ENCODE measurements at regions of chr17 and their contacts with region 1.

Region 1: DNA sequence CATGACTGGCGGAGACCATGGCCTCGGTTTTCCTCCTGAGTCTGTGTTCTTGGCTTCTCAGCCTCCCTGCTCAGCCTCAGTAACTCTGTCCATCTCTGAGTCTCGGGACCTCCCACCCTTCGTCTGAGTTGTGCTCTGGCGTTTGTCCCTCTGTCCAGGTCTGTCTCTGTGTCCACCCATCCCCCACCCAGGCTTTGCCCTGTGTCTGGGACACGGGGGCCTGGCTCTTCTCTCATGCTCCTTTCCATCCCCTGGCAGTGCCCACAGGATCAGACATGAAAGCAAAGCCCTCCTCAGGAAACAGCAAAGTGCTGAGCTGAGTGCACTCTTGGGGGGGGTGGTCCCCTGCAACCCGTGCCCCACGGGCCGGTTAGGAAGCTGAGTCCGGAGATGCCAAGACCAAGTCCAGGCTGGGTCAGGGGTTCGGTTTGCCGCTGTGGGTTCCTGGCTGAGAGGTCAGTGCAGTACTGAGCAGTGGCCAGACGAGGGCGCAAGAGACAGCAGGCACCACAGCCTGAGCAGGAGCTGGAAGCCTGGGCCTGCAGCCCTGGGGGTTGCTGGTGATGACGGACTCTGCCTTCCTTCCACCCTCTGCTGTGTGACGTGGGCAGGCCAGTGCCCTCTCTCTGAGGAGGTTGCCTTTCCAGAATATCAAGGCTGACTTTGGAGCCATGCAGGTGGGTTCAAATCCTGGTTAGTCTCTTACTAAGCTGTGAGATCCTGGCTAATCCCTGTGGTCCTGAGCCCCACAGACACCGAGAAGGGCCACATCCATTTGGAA is 2.5 kb downstream of the P2RX1 start:
- DNase-seq: peak; percentile 77 to 91
- ATAC-seq: peak; percentile 73 to 92
- H3K4me3 ChIP-seq: no peak overlapping the region
- H3K27ac ChIP-seq: peak overlapping the region in 1 of 2 experiments; percentile 65; a peak in 3 of 6 replicates
- H3K4me1 ChIP-seq: peaks cover 21% of the 10 kb centered on the region; the same call in 2 of the 3 replicates
- CTCF ChIP-seq: peak; percentile 94
- EP300 ChIP-seq: no peak
- POLR2A ChIP-seq: no peak
- RAD21 ChIP-seq: peak; percentile 88 to 91

Region 2: DNA sequence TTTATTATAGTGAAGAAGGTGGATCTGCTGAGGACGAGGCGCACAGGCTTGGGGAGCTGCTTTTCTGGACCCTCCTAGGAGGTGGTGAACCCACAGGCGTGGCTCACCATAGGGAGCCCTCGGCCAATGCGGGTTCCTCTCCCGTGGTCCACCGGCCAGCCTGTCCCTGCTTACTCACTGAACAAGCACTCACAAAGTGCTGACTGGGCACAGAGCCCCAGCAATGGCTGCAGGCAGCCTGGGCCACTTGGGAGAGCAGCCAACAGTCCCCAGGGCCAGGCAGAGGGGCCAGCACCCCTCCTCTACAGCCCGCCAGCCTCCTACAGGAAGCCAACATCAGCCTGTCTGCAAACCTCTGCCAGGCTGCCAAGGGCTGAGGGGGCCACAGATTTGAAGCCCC is 48.5 kb before region 1 on chr17:
- CTCF ChIA-PET with region 1: interaction called, 81 read pairs
- POLR2A ChIA-PET with region 1: no interaction called
- DNase-seq: no peak
- ATAC-seq: peak; percentile 42 to 57
- H3K4me3 ChIP-seq: no peak overlapping the region
- H3K27ac ChIP-seq: peak overlapping the region in 1 of 2 experiments; percentile 36; a peak in 3 of 6 replicates
- H3K4me1 ChIP-seq: peaks cover 9% of the 10 kb centered on the region; the same call in 2 of the 3 replicates
- CTCF ChIP-seq: no peak
- EP300 ChIP-seq: no peak
- POLR2A ChIP-seq: no peak
- RAD21 ChIP-seq: no peak

Region 3: DNA sequence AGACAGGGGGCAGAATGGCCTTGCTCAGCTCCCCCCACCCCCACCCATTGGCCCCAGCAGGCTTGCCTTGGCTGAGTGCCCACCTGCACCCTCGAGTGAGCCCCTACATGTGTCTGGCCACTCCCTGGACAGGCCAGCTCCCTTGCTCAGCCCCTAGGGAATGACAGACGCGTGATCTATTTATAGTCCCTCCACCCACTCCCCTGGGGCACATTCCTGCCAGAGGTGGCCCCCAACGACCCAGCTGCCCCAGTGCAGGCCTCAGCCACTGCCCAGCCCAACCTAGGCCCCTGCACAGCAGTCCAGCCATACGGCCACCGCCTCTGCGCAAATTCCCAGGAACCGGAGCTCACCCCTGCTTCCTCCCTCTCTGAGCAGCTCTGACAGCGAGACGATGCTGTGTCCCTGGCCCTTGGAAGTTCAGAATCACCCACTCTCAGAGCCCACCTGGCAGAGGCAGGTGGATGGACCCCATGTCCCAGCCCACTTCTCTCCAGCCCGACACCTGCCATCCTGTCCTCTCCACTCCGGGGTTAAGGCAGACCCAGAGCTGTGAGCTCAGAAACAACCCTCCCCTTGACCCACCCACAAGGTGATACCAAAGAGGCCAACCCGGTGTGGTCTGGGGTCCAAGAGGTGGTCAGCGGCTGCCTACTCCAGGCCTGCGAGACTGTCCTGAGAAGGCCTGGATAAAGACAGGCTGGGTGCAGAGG is 14.1 kb after region 1 on chr17:
- CTCF ChIA-PET with region 1: interaction called, 86 read pairs
- POLR2A ChIA-PET with region 1: no interaction called
- DNase-seq: no peak
- ATAC-seq: no peak
- H3K4me3 ChIP-seq: no peak overlapping the region
- H3K27ac ChIP-seq: no peak overlapping the region
- H3K4me1 ChIP-seq: no peaks in the 10 kb centered on the region
- CTCF ChIP-seq: no peak
- EP300 ChIP-seq: no peak
- POLR2A ChIP-seq: no peak
- RAD21 ChIP-seq: no peak

Region 4: DNA sequence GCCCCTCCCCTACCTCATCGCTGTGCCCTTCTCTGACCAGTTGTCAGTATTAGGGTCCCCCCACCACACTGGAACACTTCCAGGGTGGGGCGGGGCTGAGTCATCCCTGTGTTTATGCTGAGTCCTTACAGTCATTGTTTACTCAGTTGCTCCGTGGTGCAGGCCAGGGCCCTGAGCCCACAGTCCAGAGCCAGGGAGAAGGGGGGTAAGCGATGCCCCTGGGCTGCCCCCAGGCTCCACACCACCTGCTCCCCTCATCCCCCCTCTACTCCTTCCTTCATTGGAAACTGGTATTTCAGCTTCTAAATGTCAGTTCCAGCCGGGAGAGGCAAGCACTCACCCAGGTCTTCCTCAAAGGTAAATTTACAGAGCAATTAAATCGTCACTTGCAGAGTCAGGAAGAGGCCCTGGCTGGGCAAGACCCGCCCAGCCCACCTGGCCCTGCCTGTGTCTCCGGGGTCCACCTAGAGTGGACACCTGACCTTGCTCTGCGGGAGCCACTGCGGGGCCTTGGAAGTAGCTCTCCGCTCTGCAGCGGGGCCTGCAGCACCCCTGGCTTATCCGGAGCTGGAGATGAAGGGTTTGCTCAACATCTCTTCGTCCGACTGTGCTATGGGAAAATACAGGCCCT is 45.7 kb after region 1 on chr17:
- CTCF ChIA-PET with region 1: interaction called, 21 read pairs
- POLR2A ChIA-PET with region 1: no interaction called
- DNase-seq: peak; percentile 76 to 94
- ATAC-seq: peak; percentile 54 to 85; a peak in 5 of 6 replicates
- H3K4me3 ChIP-seq: no peak overlapping the region
- H3K27ac ChIP-seq: peak overlapping the region; percentile 46 to 72
- H3K4me1 ChIP-seq: peaks cover 32% of the 10 kb centered on the region
- CTCF ChIP-seq: no peak
- EP300 ChIP-seq: no peak
- POLR2A ChIP-seq: no peak
- RAD21 ChIP-seq: no peak

Region 5: GRCh38 chr17:4010754-4011153 is 97.0 kb after region 1 on chr17:
- CTCF ChIA-PET with region 1: interaction called, 166 read pairs
- POLR2A ChIA-PET with region 1: no interaction called
- DNase-seq: no peak
- ATAC-seq: no peak
- H3K4me3 ChIP-seq: no peak overlapping the region
- H3K27ac ChIP-seq: no peak overlapping the region
- H3K4me1 ChIP-seq: no peaks in the 10 kb centered on the region
- CTCF ChIP-seq: no peak
- EP300 ChIP-seq: no peak
- POLR2A ChIP-seq: no peak
- RAD21 ChIP-seq: no peak

Region 6: DNA sequence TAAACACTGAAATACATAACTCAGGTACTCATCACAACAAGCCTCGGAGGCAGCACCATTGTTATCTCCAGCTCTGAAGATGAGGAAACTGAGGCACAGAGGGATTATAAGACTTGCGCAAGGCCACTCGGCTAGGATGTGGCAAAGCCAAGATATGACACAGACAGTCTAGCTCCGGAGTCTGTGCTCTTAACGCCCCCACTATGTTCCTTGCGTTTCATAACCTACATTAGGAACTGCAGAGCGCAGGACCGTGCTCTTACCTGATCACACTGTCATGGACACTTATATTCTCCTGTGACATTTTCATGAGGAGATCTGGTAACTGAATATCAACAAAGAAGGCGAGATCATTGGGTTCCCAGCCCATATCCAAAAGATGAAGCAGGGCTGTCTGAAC is 144.0 kb after region 1 on chr17:
- CTCF ChIA-PET with region 1: interaction called, 13 read pairs
- POLR2A ChIA-PET with region 1: no interaction called
- DNase-seq: no peak
- ATAC-seq: no peak
- H3K4me3 ChIP-seq: no peak overlapping the region
- H3K27ac ChIP-seq: no peak overlapping the region
- H3K4me1 ChIP-seq: no peaks in the 10 kb centered on the region
- CTCF ChIP-seq: no peak
- EP300 ChIP-seq: no peak
- POLR2A ChIP-seq: no peak
- RAD21 ChIP-seq: no peak